BJ (cell line): ENCODE measurements at regions of chr10 and their contacts with region 1.

Region 1: GRCh38 chr10:69769395-69769992 is 32.2 kb upstream of the COL13A1 start:
- DNase-seq: peak; percentile 55
- H3K4me3 ChIP-seq: no peak overlapping the region
- H3K27me3 ChIP-seq: peaks cover 4% of the 10 kb centered on the region
- CTCF ChIP-seq: no peak

Region 2: DNA sequence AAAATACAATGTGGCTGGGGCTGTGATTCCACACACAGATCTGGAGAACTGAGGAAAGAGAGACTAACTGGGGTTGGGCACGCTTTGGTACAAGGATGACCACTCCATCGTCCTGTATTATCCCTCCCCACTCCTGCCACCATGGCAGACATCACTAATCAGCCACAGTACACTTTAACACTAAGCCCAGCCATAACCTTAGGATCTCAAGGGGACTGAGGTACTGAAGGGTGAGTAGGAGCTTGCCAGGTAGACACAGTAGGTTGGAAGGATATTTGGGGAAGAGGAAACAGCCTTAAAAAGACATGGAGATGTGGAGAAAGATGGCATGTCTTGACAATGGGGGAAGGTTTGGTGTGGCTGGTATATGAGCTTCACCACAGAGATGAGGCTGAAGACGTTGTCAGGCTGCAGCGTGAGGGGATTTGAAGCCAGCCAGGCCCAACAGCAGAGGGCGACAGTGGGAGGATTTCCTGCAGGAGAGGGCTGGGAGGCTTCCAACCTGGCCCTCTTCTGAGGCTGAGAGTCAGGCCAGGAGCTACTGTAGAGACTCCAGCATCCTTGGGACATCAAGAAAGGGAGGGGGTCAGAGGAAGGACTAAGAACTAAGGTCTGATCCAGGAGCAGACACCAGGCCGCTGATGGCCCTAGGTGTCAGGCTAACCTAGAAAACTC is 26.4 kb before region 1 on chr10:
- CTCF ChIA-PET with region 1: interaction called, 10 read pairs
- POLR2A ChIA-PET with region 1: no interaction called
- DNase-seq: no peak
- H3K4me3 ChIP-seq: no peak overlapping the region
- H3K27me3 ChIP-seq: peaks cover 7% of the 10 kb centered on the region; the same call in 1 of the 2 replicates
- CTCF ChIP-seq: peak; percentile 66

Region 3: GRCh38 chr10:69839696-69840345 is 70.3 kb after region 1 on chr10:
- CTCF ChIA-PET with region 1: no interaction called
- POLR2A ChIA-PET with region 1: no interaction called
- DNase-seq: no peak
- H3K4me3 ChIP-seq: no peak overlapping the region
- H3K27me3 ChIP-seq: no peaks in the 10 kb centered on the region
- CTCF ChIP-seq: no peak